ENCODE measurements at regions of chr19 and their contacts with region 1.

Region 1: GRCh38 chr19:2977001-2977685 is at the start of gene TLE6:
- H3K4me3 Mint-ChIP-seq: peak within 1 kb of the TSS; percentile 89
- H3K27ac Mint-ChIP-seq: peak within 1 kb of the TSS; percentile 83
- H3K4me1 Mint-ChIP-seq: peaks cover 31% of the 10 kb centered on the region
- H3K27me3 Mint-ChIP-seq: peaks cover 38% of the 10 kb centered on the region

Region 2: DNA sequence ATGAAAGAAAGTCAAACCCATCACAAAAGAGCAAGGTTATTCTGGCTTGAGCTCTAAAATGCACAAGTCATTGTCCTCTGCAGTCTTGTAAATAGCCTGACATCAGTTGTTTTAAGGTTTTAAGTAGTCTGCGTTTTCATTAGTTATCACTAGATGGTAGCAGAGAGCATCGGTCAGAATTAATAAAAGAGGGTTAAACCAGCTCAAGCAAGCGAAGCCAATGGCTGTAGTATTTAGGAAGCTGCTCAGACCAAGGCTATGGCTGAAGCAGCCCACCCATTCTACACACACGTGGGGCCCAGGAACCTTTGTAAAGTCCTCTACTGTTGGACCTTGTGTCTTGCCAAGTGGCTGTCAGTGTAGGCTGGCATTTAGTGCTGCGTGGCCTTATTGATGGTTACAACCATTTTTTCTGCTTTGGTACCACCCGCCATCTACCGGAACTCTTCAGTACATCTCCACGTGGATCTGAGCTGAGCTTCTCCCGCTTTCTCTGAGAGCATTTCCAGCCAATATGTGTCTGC is 89.7 kb before region 1 on chr19:
- intact Hi-C with region 1: no loop called
- H3K4me3 Mint-ChIP-seq: no peak overlapping the region
- H3K27ac Mint-ChIP-seq: no peak overlapping the region
- H3K4me1 Mint-ChIP-seq: peaks cover 6% of the 10 kb centered on the region
- H3K27me3 Mint-ChIP-seq: no peaks in the 10 kb centered on the region

Region 3: DNA sequence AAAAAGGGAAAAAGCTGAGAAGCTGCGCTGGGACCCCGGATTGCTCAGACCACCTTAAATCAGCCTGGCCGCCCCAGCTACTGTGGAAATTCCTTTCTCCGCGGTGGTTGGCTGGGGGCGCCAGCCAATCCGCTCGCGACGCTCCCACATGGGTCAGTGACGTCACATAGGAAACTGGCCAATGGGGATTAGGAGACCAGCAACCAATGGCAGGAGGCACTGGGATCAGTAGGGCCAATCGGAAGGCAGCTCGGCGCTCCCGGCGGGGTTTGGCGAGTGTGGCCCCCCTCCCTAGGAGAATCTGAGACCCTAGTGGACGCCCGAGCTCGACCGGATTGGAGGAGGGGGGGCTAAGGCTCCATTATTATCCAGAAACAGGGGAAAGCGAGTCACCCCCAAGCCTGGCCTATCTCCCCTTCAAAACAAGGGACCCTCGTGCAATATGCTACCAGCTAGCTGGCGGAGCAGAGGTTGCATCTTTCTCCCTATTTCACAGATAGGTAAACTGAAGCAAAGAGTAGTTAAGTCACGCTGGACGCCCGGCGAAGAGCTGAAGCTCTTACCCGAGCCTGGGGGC is 58.5 kb after region 1 on chr19:
- intact Hi-C with region 1: loop called (anchors 5 kb)
- H3K4me3 Mint-ChIP-seq: peak overlapping the region; percentile 83
- H3K27ac Mint-ChIP-seq: peak overlapping the region; percentile 93
- H3K4me1 Mint-ChIP-seq: peaks cover 29% of the 10 kb centered on the region
- H3K27me3 Mint-ChIP-seq: peaks cover 68% of the 10 kb centered on the region

Region 4: DNA sequence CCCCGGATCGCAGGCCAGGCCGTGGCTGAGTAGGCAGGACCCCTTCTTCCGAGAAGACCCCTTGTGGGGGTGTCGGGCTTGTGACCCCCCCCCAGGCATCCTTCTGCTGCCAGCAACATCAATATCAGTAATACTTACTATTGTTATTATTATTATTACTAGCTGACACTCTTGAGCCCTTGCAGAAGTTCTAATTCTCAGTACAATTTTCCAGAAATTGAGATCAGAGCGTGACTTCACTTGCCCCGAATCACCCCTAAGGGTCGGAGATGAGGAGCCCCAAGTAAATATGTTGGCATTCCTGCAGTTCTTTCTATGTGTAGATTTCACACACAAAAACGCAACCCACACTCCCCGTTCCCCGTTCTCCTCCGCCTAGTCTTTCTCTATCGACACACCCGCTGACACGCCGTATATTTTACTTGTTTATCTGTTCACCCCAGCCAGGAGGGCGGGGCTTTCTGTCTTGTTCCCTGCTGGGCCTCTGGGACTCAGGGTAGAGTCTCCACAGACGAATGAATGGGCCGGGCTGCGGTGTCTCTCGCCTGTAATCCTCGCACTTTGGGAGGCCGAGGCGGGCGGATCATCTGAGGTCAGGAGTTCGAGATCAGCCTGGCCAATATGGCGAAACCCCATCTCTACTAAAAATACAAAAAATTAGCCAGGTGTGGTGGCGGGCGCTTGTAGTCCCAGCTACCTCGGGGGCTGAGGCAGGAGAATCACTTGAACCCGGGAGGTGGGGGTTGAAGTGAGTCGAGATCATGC is 70.5 kb after region 1 on chr19:
- intact Hi-C with region 1: no loop called
- H3K4me3 Mint-ChIP-seq: peak overlapping the region; percentile 58
- H3K27ac Mint-ChIP-seq: peak overlapping the region; percentile 58
- H3K4me1 Mint-ChIP-seq: peaks cover 8% of the 10 kb centered on the region
- H3K27me3 Mint-ChIP-seq: peaks cover 60% of the 10 kb centered on the region

Region 5: DNA sequence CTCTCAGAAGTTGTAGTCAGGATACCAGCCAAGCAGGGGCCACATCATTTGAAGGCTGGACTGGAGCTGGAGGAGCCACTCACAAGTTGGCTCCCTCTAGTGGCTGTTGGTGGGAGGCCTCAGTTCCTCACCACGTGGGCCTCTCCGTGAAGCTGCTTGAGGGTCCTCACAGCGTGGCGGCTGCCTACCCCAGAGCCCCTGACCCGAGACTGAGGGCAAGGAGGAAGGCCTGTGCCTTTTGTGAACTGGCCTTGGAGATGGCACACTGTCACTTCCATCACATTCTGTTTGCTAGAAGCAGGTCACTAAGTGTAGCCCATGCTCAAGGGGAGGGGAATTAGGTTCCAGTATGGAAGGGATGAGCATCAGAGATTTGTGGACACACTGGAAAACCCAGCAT is 131.6 kb after region 1 on chr19:
- intact Hi-C with region 1: no loop called
- H3K4me3 Mint-ChIP-seq: no peak overlapping the region
- H3K27ac Mint-ChIP-seq: peak overlapping the region; percentile 40
- H3K4me1 Mint-ChIP-seq: peaks cover 24% of the 10 kb centered on the region
- H3K27me3 Mint-ChIP-seq: peaks cover 31% of the 10 kb centered on the region

Region 6: DNA sequence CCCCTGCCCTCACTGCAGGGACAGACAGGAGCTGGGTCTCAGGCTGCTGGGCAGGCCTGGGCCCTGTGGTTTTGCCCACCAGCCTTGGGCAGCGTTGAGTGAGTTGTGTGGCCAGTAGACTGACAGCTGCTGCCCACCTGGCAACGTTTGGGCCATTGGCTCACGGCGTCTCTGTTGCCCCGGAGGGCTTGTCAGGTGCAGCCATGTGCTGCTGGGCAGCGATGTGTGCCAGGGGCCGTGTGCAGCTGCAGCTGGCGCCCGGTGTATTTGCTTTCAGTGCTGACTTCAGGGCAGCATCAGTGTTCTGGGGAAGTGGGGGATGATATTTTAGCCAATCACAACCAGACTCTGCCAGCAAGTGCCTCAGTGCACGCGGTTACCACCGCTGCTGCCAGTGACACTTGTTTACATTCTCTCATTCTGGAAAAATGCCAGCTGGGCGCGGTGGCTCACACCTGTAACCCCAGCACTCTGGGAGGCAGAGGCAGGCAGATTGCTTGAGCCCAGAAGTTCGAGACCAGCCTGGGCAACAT is 539.6 kb after region 1 on chr19:
- intact Hi-C with region 1: no loop called
- H3K4me3 Mint-ChIP-seq: no peak overlapping the region
- H3K27ac Mint-ChIP-seq: no peak overlapping the region
- H3K4me1 Mint-ChIP-seq: peaks cover 54% of the 10 kb centered on the region
- H3K27me3 Mint-ChIP-seq: no peaks in the 10 kb centered on the region

Measured in dendritic cell treated with granulocyte-macrophage colony-stimulating factor and Interleukin-4, amounts not matched to agents 40 ng/mL and 50 ng/mL, for 4 days (primary cell).